A549 (cell line): ENCODE measurements at regions of chr13 and their contacts with region 1.

Region 1: GRCh38 chr13:27362064-27362883 is 62.1 kb upstream of the GTF3A start:
- DNase-seq: peak; percentile 81
- ATAC-seq: peak; percentile 97 to 98
- H3K4me3 ChIP-seq: peak overlapping the region; percentile 42
- H3K27ac ChIP-seq: peak overlapping the region; percentile 53 to 82; a peak in 4 of 6 replicates
- H3K4me1 ChIP-seq: peaks cover 4% of the 10 kb centered on the region; the same call in 1 of the 3 replicates
- CTCF ChIP-seq: peak; percentile 73
- EP300 ChIP-seq: no peak
- POLR2A ChIP-seq: no peak
- RAD21 ChIP-seq: peak; percentile 80 to 85

Region 2: DNA sequence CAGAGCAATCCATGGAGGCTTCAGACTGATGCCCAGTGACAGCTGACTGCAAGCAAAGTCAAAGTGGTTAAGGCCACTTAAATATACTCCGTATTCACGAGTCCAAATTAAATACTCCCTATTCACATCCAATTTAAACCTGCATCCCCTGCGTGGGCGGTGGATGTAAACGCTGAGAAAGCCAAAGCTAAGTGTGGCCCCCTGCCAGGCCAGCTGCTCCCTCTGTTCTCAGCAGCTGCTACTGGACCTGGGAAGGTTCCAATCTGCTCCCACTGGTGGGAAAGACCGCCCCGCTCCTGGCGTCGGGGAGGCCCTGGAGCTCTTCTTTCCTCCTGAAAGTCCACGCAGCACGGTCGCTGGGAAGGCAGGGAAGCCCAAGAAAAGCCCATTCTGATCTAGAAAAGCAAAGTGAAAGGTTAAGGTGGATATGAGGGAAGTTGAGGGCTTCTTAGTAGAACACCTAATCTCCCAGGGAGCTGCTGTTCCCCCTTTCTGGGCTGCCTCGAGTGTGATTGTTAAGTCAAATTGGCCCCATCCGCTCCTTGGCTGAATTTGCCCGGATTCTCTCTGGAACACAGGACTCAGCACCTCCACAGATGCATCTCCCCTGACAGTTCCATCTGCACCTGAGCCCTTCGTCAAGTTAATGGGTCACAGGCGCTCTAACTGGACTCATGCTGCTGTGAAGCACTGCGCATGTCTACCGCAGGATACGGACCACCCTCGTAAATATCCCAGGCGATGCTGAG is 396.1 kb before region 1 on chr13:
- CTCF ChIA-PET with region 1: interaction called, 56 read pairs
- POLR2A ChIA-PET with region 1: no interaction called
- DNase-seq: no peak
- ATAC-seq: no peak
- H3K4me3 ChIP-seq: no peak overlapping the region
- H3K27ac ChIP-seq: no peak overlapping the region
- H3K4me1 ChIP-seq: peaks cover 9% of the 10 kb centered on the region
- CTCF ChIP-seq: no peak
- EP300 ChIP-seq: no peak
- POLR2A ChIP-seq: no peak
- RAD21 ChIP-seq: no peak

Region 3: DNA sequence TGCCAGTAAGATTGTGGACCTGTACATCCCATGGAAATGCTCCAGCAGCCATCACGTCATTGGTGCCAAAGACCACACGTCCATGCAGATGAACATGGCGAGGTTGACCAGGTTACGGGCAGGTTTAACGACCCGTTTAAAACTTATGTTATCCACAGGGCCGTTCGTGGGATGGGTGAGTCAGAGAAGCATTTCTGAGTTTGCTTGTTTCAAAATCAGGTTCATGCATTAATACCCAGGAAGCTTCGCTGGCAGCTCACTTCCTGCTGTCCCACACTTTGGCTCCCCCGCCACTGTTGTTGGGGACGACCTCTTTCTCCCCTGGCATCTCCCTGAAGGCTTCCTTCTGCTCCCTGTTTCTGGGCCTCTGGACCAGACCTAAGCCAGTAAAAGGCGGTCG is 384.7 kb before region 1 on chr13:
- CTCF ChIA-PET with region 1: interaction called, 220 read pairs
- POLR2A ChIA-PET with region 1: interaction called, 6 read pairs
- DNase-seq: no peak
- ATAC-seq: no peak
- H3K4me3 ChIP-seq: no peak overlapping the region
- H3K27ac ChIP-seq: no peak overlapping the region
- H3K4me1 ChIP-seq: peaks cover 6% of the 10 kb centered on the region
- CTCF ChIP-seq: no peak
- EP300 ChIP-seq: no peak
- POLR2A ChIP-seq: no peak
- RAD21 ChIP-seq: no peak

Region 4: GRCh38 chr13:27321468-27322431 is 40.5 kb before region 1 on chr13:
- CTCF ChIA-PET with region 1: no interaction called
- POLR2A ChIA-PET with region 1: no interaction called
- DNase-seq: no peak
- ATAC-seq: no peak
- H3K4me3 ChIP-seq: no peak overlapping the region
- H3K27ac ChIP-seq: no peak overlapping the region
- H3K4me1 ChIP-seq: no peaks in the 10 kb centered on the region
- CTCF ChIP-seq: no peak
- EP300 ChIP-seq: no peak
- POLR2A ChIP-seq: no peak
- RAD21 ChIP-seq: no peak

Region 5: DNA sequence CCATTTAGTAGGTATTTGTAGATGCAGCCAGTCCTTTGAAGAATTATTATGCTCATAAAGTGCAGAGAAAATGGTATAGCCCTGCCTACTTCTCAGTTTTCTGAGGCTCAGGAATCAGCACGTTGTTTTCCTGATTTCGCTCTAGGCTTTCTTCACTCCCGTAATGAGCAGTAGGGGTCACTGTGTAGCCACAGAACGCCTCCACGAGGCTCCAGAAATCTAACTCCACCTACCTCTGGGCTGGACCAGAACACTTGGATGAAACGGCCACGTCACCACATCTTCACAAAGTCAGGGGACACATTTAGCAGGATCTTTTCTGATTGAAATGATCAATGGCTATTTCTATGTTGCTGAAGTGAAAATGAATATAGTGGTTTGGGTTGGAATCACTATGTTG is 12.4 kb after region 1 on chr13:
- CTCF ChIA-PET with region 1: interaction called, 96 read pairs
- POLR2A ChIA-PET with region 1: no interaction called
- DNase-seq: peak; percentile 76 to 81
- ATAC-seq: peak; percentile 91 to 94
- H3K4me3 ChIP-seq: no peak overlapping the region
- H3K27ac ChIP-seq: no peak overlapping the region
- H3K4me1 ChIP-seq: 0 out of 3 replicates have a peak, but pooled peaks cover 4% of the 10 kb centered on the region
- CTCF ChIP-seq: peak; percentile 67
- EP300 ChIP-seq: no peak
- POLR2A ChIP-seq: no peak
- RAD21 ChIP-seq: peak; percentile 68 to 77

Region 6: DNA sequence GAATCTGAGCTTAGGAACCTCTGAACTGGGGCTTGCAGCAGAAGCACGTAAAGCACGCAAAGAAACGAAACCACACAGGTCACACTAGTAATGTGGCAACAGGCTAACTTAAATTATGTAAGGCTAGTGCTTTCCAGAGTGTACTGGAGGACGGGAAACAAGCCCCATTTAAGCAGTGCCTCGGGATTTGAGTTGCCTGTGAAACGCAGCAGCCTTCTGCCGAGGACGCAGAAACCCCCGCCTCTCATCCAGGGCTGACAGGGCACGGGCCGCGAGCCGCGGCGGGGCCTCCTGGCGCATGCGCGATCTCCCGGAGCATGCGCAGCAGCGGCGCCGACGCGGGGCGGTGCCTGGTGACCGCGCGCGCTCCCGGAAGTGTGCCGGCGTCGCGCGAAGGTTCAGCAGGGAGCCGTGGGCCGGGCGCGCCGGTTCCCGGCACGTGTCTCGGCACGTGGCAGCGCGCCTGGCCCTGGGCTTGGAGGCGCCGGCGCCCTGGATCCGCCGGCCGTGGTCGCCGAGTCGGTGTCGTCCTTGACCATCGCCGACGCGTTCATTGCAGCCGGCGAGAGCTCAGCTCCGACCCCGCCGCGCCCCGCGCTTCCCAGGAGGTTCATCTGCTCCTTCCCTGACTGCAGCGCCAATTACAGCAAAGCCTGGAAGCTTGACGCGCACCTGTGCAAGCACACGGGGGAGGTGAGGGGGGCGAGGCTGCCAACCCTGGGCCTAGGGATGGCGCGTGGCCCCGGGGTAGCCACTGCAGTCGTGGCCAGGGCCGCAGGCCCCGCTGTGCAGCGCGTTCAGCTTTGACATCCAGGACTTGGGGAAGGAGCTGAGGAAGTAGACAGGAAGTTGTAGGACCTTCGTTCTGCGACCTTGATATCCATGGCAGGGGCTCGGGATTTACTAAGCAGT is 62.2 kb after region 1 on chr13 and contains the start of gene GTF3A:
- CTCF ChIA-PET with region 1: interaction called, 18 read pairs
- POLR2A ChIA-PET with region 1: no interaction called
- DNase-seq: peak; percentile 80 to 85
- ATAC-seq: peak; percentile 82 to 86
- H3K4me3 ChIP-seq: peak within 1 kb of the TSS; percentile 67
- H3K27ac ChIP-seq: peak within 1 kb of the TSS; percentile 86 to 97
- H3K4me1 ChIP-seq: peaks cover 17% of the 10 kb centered on the region
- CTCF ChIP-seq: no peak
- EP300 ChIP-seq: no peak
- POLR2A ChIP-seq: peak; percentile 75
- RAD21 ChIP-seq: no peak
- polyA plus RNA-seq, gene GTF3A: 125 and 132 TPM in 2 replicates

Region 7: DNA sequence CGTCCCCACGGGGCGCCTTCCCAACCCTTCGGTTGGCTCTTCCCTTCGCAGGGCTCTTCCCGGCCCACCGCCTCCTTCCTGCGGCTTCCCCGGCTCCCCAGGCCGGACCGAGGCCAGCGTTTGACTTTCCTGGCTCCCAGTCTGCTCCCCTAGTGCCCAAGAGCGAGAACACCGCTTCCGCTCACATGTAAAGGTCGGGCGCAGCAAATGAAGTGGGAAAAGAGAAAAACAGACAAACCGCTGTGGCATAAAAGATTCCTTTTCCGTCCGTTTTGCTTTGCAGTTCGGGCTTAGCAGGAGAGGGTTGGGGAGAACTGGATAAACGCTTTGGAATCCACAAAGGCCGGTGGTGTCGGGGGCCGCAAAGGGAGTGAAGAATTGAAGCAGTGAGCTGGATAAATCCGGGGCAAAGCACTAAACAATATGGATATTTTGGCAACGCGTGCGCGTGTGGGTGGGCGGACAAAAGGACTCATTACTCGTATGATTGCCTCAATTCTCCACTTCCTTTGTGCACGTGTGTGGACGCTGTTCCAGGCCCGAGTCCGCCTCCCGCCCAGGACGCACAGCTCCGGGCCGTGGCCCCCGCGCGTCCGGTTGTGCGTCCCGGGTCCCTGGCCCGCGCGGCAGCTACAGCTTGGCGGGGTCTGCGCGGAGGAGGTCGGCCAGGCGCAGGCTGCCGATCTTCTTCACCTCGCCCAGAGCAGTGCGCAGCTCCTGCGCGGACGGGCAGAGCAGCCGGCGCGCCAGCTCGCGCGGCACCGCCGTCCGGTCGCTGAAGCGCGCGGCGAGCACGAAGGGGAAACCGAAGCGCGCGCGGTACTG is 615.4 kb after region 1 on chr13:
- CTCF ChIA-PET with region 1: interaction called, 74 read pairs
- POLR2A ChIA-PET with region 1: no interaction called
- DNase-seq: peak in 1 of 2 experiments; percentile 29
- ATAC-seq: peak; percentile 27 to 68; a peak in 3 of 6 replicates
- H3K4me3 ChIP-seq: peak overlapping the region; percentile 31; the same call in 2 of the 3 replicates
- H3K27ac ChIP-seq: no peak overlapping the region
- H3K4me1 ChIP-seq: no peaks in the 10 kb centered on the region; the same call in 2 of the 3 replicates
- CTCF ChIP-seq: no peak
- EP300 ChIP-seq: no peak
- POLR2A ChIP-seq: no peak
- RAD21 ChIP-seq: no peak